ENCODE measurements at regions of chr18 and their contacts with region 1.

Region 1: DNA sequence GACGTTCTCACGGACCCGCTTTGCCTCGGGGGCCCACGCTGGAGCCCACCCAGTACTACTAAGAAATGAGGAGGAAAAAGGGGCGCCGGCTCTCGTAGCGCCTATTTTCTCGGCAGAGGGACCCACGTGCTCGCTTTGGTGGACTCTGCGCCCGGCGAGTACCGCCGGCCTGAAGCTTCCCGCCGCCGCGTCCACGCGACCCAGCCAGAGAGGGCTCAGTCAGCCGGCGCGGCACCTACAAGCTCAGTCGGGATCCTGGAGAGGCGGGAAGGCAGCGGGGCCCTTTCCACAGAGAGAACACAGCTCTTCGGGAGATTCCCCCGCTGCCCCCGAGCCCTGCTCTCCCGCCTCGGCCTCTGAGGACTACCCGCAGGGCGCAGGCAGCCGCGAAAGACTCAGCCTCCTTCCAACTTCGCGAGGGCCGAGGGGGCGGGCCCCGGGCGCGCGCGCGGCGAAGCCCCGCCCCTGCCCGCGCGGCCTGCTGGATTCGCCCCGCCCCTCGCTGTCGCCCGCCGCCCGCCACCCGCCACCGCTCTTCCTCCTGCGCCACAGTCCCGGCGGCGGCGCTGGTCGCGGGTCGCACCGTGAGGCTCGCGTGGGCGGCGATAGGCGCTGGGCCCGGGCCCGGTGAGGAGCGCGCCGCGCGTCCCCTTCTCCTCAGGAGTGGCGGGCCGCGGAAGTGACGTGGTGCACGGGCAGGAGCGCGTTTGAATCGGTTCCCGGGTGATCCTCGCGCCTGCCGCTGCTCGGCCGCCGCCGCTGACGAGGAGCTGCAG is at the start of gene SMCHD1:
- DNase-seq: peak; percentile 95
- ATAC-seq: peak; percentile 74
- H3K4me3 Mint-ChIP-seq: peak within 1 kb of the TSS; percentile 94
- H3K27ac Mint-ChIP-seq: peak within 1 kb of the TSS; percentile 94
- H3K4me1 Mint-ChIP-seq: peaks cover 19% of the 10 kb centered on the region
- H3K27me3 Mint-ChIP-seq: no peaks in the 10 kb centered on the region
- total RNA-seq, gene SMCHD1: 171 to 177 TPM

Region 2: GRCh38 chr18:2589345-2590068 is 65.9 kb before region 1 on chr18:
- POLR2A ChIA-PET with region 1: interaction called, 59 read pairs
- DNase-seq: no peak
- ATAC-seq: peak; percentile 83
- H3K4me3 Mint-ChIP-seq: peak overlapping the region; percentile 83
- H3K27ac Mint-ChIP-seq: peak overlapping the region; percentile 98
- H3K4me1 Mint-ChIP-seq: peaks cover 40% of the 10 kb centered on the region
- H3K27me3 Mint-ChIP-seq: no peaks in the 10 kb centered on the region

Region 3: GRCh38 chr18:2627821-2628276 is 27.5 kb before region 1 on chr18:
- POLR2A ChIA-PET with region 1: interaction called, 18 read pairs
- DNase-seq: no peak
- ATAC-seq: peak; percentile 92
- H3K4me3 Mint-ChIP-seq: no peak overlapping the region
- H3K27ac Mint-ChIP-seq: peak overlapping the region; percentile 38
- H3K4me1 Mint-ChIP-seq: peaks cover 15% of the 10 kb centered on the region
- H3K27me3 Mint-ChIP-seq: no peaks in the 10 kb centered on the region

Region 4: GRCh38 chr18:2641638-2642037 is 13.7 kb before region 1 on chr18:
- POLR2A ChIA-PET with region 1: interaction called, 159 read pairs
- DNase-seq: no peak
- ATAC-seq: peak; percentile 57
- H3K4me3 Mint-ChIP-seq: peak overlapping the region; percentile 75
- H3K27ac Mint-ChIP-seq: no peak overlapping the region
- H3K4me1 Mint-ChIP-seq: peaks cover 38% of the 10 kb centered on the region
- H3K27me3 Mint-ChIP-seq: no peaks in the 10 kb centered on the region

Region 5: DNA sequence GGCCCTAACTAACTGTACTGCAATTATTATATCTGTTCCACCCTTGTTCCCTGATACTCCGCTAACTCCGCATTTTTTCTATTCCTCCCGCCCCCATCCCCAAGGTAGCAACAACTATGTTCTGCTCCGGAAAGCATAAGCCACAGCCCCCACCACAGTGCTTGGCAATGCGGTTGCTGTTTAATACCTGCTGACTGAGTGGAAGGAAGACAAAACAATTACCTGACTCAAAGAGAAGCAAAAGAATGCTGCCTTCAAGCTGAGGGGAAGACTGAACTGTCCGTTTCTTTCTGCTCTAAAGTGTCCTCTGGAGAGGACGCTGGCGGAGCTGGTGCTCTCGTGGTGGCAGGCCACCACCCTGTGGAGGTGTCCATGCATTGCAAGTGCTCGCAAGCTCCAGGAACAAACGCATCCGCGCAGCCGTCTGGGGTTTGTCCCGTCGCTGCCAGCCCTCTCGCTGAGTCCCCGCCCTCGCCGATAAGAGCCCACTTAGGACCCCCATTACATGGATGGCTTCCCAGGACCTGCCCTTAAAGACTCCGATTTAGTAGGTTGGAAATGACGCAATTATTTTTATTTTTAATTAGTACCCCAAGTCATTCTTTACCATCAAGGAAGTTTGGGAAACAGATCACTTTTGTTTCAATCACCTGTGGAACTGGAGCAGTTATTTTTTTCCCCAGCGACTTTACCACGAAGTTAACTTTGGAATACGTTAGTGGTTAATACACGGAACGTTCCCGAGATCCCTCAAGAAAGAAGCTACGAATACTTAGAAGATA is 590.7 kb after region 1 on chr18:
- POLR2A ChIA-PET with region 1: interaction called, 22 read pairs
- DNase-seq: peak; percentile 80
- ATAC-seq: peak; percentile 44
- H3K4me3 Mint-ChIP-seq: peak overlapping the region; percentile 92
- H3K27ac Mint-ChIP-seq: peak overlapping the region; percentile 99
- H3K4me1 Mint-ChIP-seq: peaks cover 29% of the 10 kb centered on the region
- H3K27me3 Mint-ChIP-seq: no peaks in the 10 kb centered on the region

Measured in activated naive CD8-positive, alpha-beta T cell treated with anti-CD3 and anti-CD28 coated beads, Interleukin-2, amount 10 ng/mL, durations not matched to agents 7 days and 5 days (primary cell).